ENCODE measurements at regions of chr6 and their contacts with region 1.

Region 1: GRCh38 chr6:38702558-38703397 is at the start of gene GLO1:
- DNase-seq: peak; percentile 97 to 100 (median 99)

Region 2: GRCh38 chr6:38427492-38428210 is 275.1 kb before region 1 on chr6:
- intact Hi-C with region 1: no loop called
- DNase-seq: no peak

Region 3: DNA sequence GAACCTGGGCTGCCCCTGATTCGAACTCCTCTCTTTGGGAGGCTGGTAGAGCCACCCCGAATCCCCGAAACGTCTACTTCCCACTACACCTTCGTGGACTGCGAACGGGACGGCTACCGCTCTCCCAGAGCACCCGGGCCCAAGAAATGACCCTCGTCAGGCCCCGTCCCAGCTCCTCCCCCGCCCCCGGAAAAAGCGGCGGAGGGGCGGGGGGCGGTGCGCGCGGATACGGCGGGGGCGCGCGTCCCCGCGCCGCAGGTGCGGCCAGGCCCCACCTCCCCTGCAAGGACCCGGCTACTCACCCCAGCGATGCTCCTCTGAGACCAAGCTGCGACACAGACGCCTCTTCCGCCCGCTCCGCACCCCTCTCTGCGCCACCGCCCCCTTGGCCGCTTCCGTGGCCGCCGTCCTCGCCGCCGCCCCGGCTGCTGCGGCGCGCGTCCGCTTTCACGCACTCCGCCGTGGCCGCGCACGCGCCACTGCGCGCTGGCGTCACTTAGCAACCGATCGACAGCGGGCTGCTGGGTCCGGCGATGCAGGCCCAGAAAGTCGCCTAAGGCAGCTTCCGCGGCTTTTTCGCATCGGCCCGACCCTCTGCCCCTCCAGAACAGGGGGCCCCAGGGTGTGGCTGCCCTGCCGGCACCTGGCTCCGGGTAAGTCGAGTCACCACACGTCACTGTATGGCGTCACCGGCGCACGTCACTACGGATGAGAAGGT is 63.1 kb before region 1 on chr6 and contains the start of gene BTBD9:
- intact Hi-C with region 1: loop called (anchors 2 kb)
- DNase-seq: peak; percentile 63 to 97 (median 76)

Region 4: DNA sequence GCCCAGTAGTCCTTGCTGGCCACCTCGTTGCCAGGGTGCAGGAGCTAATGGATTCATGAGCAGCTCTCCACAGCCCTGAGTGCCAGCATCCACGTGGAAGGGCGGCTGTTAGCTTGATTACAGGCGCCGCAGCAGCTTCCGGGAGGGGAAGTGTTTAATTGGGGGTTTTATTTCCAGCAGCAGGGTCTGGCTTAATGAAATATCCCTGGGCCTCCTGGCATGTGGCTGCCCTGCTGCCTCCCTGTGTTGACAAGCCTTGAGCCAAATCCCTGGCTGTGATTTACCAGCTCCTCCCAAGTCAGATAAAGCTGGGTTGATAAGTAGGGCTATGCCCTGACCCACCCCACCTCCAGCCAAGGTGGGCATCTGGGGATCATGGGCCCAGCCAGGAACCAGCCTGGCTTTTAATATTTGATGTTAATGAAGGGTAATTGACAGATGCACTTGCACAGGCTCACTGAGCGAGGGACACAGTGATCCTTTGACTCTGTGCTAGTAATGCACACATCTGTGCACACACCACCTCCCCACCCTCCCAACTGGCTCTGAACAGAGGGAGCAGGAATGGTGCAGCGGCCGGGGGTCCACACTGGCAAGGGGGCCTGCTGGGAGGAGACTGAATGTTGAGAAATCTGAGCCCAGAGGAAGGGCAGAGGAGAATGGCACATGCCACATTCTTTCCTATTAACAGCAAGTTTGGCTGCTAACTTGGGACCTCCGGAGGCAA is 359.4 kb after region 1 on chr6:
- intact Hi-C with region 1: no loop called
- DNase-seq: peak in 2 of 10 donors; percentile 37 to 66

Region 5: GRCh38 chr6:39114704-39115599 is 412.2 kb after region 1 on chr6 and contains the start of gene SAYSD1:
- intact Hi-C with region 1: loop called (anchors 5 kb)
- DNase-seq: peak; percentile 81 to 98 (median 89)

Measured in posterior cingulate gyrus (tissue), 11 donors.